ENCODE measurements at regions of chr3 and their contacts with region 1.

Region 1: DNA sequence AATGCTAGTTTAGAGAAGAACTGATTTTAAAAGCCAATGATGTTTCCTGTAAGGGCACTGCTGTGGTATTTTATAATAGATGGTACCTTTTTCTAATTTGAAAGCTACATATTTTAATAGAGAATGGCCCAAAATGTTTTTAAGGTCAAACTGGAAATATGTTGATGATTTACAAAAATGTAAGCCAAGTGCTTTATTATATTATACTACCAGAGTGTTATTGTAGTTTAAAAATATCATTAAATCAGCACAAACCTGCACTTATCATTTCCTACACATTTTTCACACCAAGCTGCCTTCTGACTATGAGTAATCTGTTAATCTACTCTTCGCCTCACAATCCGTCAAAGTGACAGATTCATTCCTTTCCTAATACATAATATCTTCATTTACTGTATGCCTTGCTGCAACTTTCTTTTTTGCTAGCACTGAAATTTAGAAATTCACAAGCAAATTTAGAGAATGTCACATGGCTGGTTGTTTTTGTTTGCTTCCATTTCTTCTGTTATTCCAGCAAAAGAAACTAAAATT is 126.4 kb upstream of the FAM3D start:
- DNase-seq: no peak
- H3K4me3 ChIP-seq: no peak overlapping the region
- H3K27ac ChIP-seq: no peak overlapping the region
- H3K4me1 ChIP-seq: no peaks in the 10 kb centered on the region
- H3K27me3 ChIP-seq: no peaks in the 10 kb centered on the region
- CTCF ChIP-seq: no peak

Region 2: GRCh38 chr3:59879031-59879581 is 1086.1 kb after region 1 on chr3:
- CTCF ChIA-PET with region 1: no interaction called
- POLR2A ChIA-PET with region 1: interaction called, 10 read pairs
- intact Hi-C with region 1: no loop called
- DNase-seq: no peak
- H3K4me3 ChIP-seq: no peak overlapping the region
- H3K27ac ChIP-seq: no peak overlapping the region
- H3K4me1 ChIP-seq: no peaks in the 10 kb centered on the region
- H3K27me3 ChIP-seq: no peaks in the 10 kb centered on the region
- CTCF ChIP-seq: no peak